Tibial artery (tissue), 4 donors: ENCODE measurements at regions of chr19 and their contacts with region 1.

Region 1: GRCh38 chr19:38402967-38403861 is at the start of gene FAM98C:
- DNase-seq: peak; percentile 93 to 97
- H3K4me3 ChIP-seq: peak within 1 kb of the TSS; percentile 90 to 94
- H3K27ac ChIP-seq: peak within 1 kb of the TSS; percentile 83 to 87
- H3K4me1 ChIP-seq: peaks cover 0 to 21% (median 5%) of the 10 kb centered on the region in 4 donors
- H3K27me3 ChIP-seq: peaks cover 0 to 34% of the 10 kb centered on the region in 2 donors
- CTCF ChIP-seq: peak; percentile 94 to 99

Region 2: DNA sequence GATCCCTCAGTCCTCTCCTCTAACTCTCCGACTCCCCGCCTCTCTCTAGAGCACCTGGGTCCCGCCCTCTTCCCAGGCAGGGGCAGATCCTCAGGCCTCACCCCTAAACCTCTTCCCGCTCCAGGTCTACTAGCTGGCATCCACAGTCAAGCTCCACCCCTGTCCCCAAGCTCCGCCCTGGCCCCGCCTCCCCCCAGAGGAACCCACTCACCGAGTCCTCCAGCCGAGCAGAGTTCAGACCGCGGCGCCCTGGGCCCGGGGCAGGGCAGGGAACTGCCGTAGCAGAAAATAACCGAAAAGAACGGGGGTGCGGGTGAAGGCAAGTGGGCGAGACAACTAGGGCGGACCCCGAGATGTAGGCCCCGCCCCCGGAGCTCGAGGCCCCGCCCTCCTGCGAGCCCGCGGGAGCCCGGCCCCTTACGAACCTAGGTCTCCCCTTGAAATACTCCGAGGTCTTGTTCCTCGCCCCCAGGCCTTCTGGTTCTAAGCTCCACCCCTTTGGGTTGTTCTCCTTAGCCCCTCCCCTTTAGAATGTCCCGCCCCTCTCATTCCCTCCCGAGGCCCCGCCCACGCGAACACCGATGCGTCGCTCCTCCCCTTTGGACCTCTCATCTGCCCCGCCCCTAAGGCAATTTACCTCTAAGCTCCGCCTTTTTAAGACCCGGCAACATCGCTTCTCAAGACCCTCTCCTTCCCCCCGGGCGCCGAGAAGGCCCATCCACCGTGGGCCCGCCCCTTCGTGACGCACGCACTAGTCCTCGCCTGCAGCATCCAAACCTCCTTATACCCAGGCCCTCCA is 15.5 kb before region 1 on chr19 and contains the start of gene GGN:
- intact Hi-C with region 1: loop called (anchors 2 kb)
- DNase-seq: peak; percentile 80 to 90
- H3K4me3 ChIP-seq: peak within 1 kb of the TSS; percentile 54 to 73
- H3K27ac ChIP-seq: peak within 1 kb of the TSS; percentile 84 to 86
- H3K4me1 ChIP-seq: peaks cover 5 to 45% (median 34%) of the 10 kb centered on the region in 4 donors
- H3K27me3 ChIP-seq: no peaks in the 10 kb centered on the region
- CTCF ChIP-seq: no peak

Region 3: GRCh38 chr19:38634757-38635482 is 231.7 kb after region 1 on chr19:
- intact Hi-C with region 1: loop called (anchors 5 kb)
- DNase-seq: peak; percentile 63 to 84
- H3K4me3 ChIP-seq: no peak overlapping the region
- H3K27ac ChIP-seq: peak overlapping the region in 1 of 2 donors; percentile 25
- H3K4me1 ChIP-seq: peaks cover 0 to 9% (median 0%) of the 10 kb centered on the region in 4 donors
- H3K27me3 ChIP-seq: no peaks in the 10 kb centered on the region
- CTCF ChIP-seq: peak; percentile 90 to 97